ENCODE measurements at regions of chr14 and their contacts with region 1.

Region 1: GRCh38 chr14:59126710-59127432 is 61.6 kb upstream of the DAAM1 start:
- DNase-seq: peak; percentile 64
- ATAC-seq: peak; percentile 90
- H3K4me3 ChIP-seq: no peak overlapping the region
- H3K27ac ChIP-seq: no peak overlapping the region
- H3K4me1 ChIP-seq: no peaks in the 10 kb centered on the region; the same call in 1 of the 2 replicates
- H3K27me3 ChIP-seq: peaks cover 2% of the 10 kb centered on the region; the same call in 1 of the 2 replicates
- CTCF ChIP-seq: peak; percentile 81
- POLR2A ChIP-seq: no peak
- RAD21 ChIP-seq: peak; percentile 94

Region 2: GRCh38 chr14:59028476-59029202 is 98.2 kb before region 1 on chr14:
- CTCF ChIA-PET with region 1: no interaction called
- POLR2A ChIA-PET with region 1: no interaction called
- dilution Hi-C with region 1: no loop called
- in situ Hi-C with region 1: loop called (anchors 5 kb)
- intact Hi-C with region 1: loop called (anchors 1 kb)
- DNase-seq: peak; percentile 97
- ATAC-seq: peak; percentile 99
- H3K4me3 ChIP-seq: no peak overlapping the region
- H3K27ac ChIP-seq: no peak overlapping the region
- H3K4me1 ChIP-seq: no peaks in the 10 kb centered on the region
- H3K27me3 ChIP-seq: no peaks in the 10 kb centered on the region
- CTCF ChIP-seq: peak; percentile 95
- POLR2A ChIP-seq: no peak
- RAD21 ChIP-seq: peak; percentile 89

Region 3: DNA sequence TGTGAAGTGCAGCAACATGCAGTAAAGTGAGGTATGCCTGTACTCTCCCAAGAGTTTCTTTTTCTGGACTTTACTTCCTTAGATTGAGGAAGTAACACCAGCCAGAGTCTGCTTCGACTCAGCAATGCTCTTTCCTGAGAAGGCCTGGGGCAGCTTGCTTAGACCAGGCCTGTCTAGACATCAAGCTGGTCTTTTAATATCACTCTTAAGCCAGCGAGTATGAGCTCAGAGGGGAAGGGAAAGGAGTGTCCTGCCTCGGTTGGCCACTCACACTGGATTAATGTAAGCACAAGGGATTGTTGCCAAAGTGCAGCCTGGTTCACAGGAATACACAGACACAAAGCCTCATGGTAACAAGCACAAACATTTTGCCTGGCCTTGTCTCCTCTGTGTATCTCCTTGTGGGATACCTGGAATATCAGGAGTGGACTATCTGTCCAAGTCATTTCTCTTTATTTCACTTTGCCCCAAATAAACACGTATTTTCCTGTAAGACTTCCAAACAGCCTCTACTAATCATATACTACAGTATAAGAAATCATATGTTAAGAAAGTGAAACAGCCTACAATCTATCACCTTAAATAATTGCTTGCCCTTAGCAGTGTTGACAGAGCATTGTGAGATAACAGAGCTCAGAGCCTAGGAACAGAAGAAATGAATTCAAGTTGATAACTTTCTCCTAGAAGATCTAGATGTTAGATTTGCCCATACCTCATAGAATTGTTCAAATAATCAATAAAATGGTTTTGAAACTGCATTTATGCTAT is 59.6 kb before region 1 on chr14:
- CTCF ChIA-PET with region 1: no interaction called
- POLR2A ChIA-PET with region 1: no interaction called
- dilution Hi-C with region 1: no loop called
- in situ Hi-C with region 1: no loop called
- intact Hi-C with region 1: no loop called
- DNase-seq: peak; percentile 17
- ATAC-seq: peak; percentile 42
- H3K4me3 ChIP-seq: no peak overlapping the region
- H3K27ac ChIP-seq: no peak overlapping the region
- H3K4me1 ChIP-seq: no peaks in the 10 kb centered on the region
- H3K27me3 ChIP-seq: no peaks in the 10 kb centered on the region
- CTCF ChIP-seq: no peak
- POLR2A ChIP-seq: no peak
- RAD21 ChIP-seq: no peak

Region 4: DNA sequence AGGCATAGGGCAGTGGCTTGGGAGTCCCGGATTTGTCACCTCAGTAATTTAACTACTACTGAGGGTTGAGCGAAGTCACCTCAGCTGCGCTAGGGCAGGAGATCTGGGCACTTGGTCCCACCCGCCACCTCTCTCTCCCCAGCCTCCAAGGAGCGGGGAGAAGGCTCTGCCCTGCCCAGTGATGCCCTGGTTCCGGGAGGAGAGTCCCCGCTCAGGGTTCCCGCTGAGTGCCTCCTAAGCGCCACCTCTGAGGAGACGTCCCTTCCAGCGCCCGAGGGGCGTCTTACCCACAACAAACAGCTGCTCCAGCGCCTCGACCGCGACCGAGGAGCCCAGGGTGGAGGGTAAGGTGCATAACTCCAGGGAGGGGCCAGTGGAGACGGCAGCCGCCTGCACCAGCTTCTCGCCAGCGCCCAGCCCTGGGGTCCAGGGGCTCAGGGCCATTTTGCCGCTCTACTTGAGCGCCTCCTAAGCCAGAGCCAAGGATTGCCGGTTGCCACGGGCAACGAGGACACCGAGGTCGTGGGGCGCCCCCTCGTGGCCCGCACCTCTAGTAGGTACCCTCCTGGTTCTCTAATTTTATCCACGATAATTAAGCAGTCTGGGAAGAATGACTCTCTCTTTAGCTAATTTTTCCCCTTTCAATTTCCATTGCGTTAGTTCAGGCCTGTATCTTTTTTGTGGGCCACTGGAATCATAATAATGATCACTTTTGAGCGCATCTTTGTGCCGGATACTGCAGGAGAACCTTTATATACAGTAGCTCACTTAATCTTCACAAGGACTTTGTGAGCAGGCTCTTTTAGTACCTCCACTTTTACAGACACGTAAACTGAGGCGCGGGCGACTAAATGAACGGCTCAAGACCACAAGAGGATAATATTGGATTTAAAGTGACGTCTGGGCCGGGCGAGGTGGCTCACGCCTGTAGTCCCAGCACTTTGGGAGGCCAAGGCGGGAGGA is 449.7 kb after region 1 on chr14 and contains the start of gene CCDC175:
- CTCF ChIA-PET with region 1: no interaction called
- POLR2A ChIA-PET with region 1: no interaction called
- dilution Hi-C with region 1: no loop called
- in situ Hi-C with region 1: loop called (anchors 10 kb)
- intact Hi-C with region 1: loop called (anchors 1 kb)
- DNase-seq: peak; percentile 71
- ATAC-seq: peak; percentile 98
- H3K4me3 ChIP-seq: peak within 1 kb of the TSS; percentile 37
- H3K27ac ChIP-seq: no peak within 1 kb of the TSS
- H3K4me1 ChIP-seq: no peaks in the 10 kb centered on the region
- H3K27me3 ChIP-seq: peaks cover 10% of the 10 kb centered on the region
- CTCF ChIP-seq: peak; percentile 88
- POLR2A ChIP-seq: no peak
- RAD21 ChIP-seq: peak; percentile 76
- total RNA-seq, gene CCDC175: not detected in 2 replicates